Posterior cingulate gyrus (tissue), 11 donors: ENCODE measurements at regions of chr11 and their contacts with region 1.

Region 1: DNA sequence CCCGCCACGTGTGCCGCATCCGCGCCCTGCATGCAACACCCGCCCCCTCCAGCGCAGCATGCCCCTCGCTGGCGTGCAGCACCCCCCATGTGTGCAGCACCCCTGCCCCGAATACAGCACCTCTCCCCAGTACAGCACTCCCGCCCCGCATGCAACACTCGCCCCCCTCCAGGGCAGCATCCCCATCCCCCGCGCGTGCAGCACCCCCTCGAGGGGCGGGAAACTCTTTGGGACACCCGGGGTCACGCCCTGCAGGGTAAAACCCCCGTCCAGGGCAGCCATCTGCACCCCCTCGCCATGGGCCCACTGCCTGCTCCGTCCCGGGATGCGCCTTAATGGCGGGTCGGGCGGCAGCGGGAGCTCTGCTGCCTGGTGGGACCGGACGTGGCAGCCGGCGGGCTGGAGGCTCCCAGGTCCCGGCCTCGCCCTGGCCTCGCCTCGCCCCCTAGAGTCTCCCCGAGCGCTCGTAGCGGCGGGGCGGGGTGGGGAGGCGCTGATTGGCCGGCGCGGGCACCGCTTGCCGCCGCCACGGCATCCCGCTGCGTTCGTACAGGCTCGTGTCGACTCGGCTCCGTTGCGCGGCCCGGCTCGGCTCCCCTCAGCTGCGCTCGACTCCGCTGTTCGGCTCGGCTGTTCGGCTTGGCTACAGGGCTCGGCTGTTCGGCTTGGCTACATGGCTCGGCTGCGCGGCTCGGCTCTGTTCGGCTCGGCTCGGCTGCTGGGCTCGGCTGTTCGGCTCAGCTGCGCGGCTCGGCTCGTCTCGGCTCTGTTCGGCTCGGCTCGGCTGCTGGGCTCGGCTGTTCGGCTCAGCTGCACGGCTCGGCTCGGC is 417 bp upstream of the BRSK2 start:
- DNase-seq: peak; percentile 94 to 100 (median 98)

Region 2: DNA sequence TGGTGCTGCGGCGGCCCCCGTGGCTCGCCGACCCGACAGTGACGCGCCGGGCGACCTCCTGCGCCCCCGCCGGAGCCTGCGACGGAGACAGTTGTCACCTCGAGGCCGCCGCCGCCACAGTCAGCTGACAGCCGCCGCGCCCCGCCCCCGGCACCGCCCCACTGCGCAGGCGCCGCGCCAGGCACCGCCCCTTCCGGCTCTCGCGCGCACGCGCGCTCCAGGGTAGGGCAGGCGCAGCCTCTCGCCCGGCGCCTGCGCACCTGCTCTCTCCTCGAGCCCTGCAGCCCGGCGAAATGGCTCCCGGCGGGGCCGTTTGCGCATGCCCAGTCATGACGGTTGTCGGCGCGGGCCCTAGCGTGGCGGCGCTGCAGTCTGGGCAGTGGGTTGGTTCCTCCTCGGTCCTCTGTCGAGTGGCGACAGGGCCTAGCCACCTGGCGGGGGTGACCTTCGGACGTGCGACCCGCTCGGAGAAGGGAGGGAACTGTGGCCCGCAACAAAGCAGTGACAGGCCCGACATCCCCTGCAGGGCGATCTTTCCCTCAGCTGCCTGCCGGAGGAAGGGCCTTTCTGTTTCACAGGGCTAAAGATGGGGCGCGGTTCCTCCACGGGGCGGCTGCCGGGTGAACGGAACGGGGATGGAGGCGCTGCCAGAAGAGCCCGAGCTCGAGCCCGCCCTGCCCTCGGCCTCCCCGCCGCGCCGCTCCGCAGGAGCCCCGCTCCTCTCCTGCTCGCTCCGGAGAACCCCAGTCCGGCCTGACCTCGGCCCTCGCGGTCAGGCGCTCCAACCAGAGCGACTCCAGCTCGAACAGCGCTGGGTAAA is 79.6 kb before region 1 on chr11 and contains the start of gene TOLLIP:
- intact Hi-C with region 1: loop called (anchors 5 kb)
- DNase-seq: peak; percentile 91 to 99 (median 96)

Region 3: GRCh38 chr11:1335811-1336761 is 53.2 kb before region 1 on chr11:
- intact Hi-C with region 1: loop called (anchors 2 kb)
- DNase-seq: peak in 5 of 10 donors; percentile 44 to 93 (median 61)

Region 4: DNA sequence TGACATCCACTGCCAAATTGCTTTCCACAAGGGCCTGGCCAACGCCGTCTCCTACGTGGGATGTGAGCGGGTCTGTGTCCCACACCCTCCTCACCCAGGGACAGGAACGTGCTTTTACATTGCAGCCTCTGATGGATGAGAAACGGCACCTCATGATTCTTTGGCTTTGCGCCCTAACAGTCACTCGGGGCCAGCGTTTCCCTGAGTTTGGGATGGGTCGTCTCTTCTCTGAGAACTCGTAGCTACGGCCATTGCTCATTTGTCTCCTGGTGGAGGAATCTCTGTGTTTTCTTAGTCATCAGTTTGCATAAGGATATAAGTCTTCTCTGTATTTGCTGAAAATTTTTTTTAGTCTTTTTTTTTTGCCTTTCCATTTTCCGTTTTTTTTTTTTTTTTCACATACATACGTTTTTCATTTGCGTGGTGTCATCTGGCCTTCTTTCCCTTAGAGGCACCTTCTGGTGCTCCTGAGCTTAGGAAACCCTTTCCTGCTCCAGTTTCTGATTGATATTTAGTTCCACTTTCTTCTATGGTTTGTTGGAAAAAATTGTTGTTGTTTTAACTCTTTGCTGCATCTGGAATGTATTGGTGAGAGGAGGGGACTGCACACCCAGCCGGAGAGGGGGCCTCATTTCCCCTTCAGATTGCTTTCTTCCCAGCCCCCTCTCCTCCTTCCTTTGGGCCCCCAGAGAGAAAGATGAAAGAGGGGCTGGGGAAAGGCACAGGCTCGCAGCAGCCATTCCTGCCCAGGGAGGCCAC is 542.2 kb after region 1 on chr11:
- intact Hi-C with region 1: no loop called
- DNase-seq: peak in 3 of 10 donors; percentile 19 to 79 (median 58)